GM12878 (cell line): ENCODE measurements at regions of chr9 and their contacts with region 1.

Region 1: GRCh38 chr9:89549031-89549644 is 51.2 kb upstream of the SEMA4D start:
- DNase-seq: peak; percentile 62
- ATAC-seq: peak; percentile 100
- H3K4me3 ChIP-seq: no peak overlapping the region
- H3K27ac ChIP-seq: no peak overlapping the region
- H3K4me1 ChIP-seq: peaks cover 10% of the 10 kb centered on the region
- H3K27me3 ChIP-seq: no peaks in the 10 kb centered on the region
- CTCF ChIP-seq: peak; percentile 91 to 95 (median 93)
- EP300 ChIP-seq: no peak
- POLR2A ChIP-seq: no peak
- RAD21 ChIP-seq: peak; percentile 92

Region 2: GRCh38 chr9:89318123-89319014 is 230.8 kb before region 1 on chr9 and contains the start of gene SECISBP2:
- CTCF ChIA-PET with region 1: interaction called, 11 read pairs
- POLR2A ChIA-PET with region 1: interaction called, 3 read pairs
- RAD21 ChIA-PET with region 1: interaction called, 12 read pairs
- SMC1A ChIA-PET with region 1: interaction called, 23 read pairs
- in situ Hi-C with region 1: no loop called
- intact Hi-C with region 1: loop called (anchors 2 kb)
- DNase-seq: peak; percentile 79
- ATAC-seq: peak; percentile 92
- H3K4me3 ChIP-seq: peak within 1 kb of the TSS; percentile 74
- H3K27ac ChIP-seq: peak within 1 kb of the TSS; percentile 98
- H3K4me1 ChIP-seq: peaks cover 8% of the 10 kb centered on the region
- H3K27me3 ChIP-seq: no peaks in the 10 kb centered on the region
- CTCF ChIP-seq: peak; percentile 63 to 74 (median 72); a peak in 5 of 6 replicates
- EP300 ChIP-seq: peak; percentile 9 to 14; a peak in 2 of 4 replicates
- POLR2A ChIP-seq: peak; percentile 97
- RAD21 ChIP-seq: no peak; the same call in 1 of the 2 replicates
- polyA plus RNA-seq, gene SECISBP2: 4.6 to 6.6 TPM

Region 3: GRCh38 chr9:89375191-89375760 is 173.9 kb before region 1 on chr9:
- CTCF ChIA-PET with region 1: interaction called, 42 read pairs
- POLR2A ChIA-PET with region 1: interaction called, 9 read pairs
- RAD21 ChIA-PET with region 1: interaction called, 39 read pairs
- SMC1A ChIA-PET with region 1: interaction called, 25 read pairs
- in situ Hi-C with region 1: no loop called
- intact Hi-C with region 1: no loop called
- DNase-seq: peak; percentile 42
- ATAC-seq: peak; percentile 74
- H3K4me3 ChIP-seq: no peak overlapping the region
- H3K27ac ChIP-seq: peak overlapping the region; percentile 69
- H3K4me1 ChIP-seq: peaks cover 15% of the 10 kb centered on the region
- H3K27me3 ChIP-seq: no peaks in the 10 kb centered on the region
- CTCF ChIP-seq: peak in 2 of 3 experiments; percentile 15 to 36; a peak in 3 of 6 replicates
- EP300 ChIP-seq: no peak
- POLR2A ChIP-seq: peak; percentile 61
- RAD21 ChIP-seq: peak; percentile 36; the same call in 1 of the 2 replicates

Region 4: GRCh38 chr9:89428901-89429890 is 119.9 kb before region 1 on chr9:
- CTCF ChIA-PET with region 1: interaction called, 207 read pairs
- POLR2A ChIA-PET with region 1: interaction called, 13 read pairs
- RAD21 ChIA-PET with region 1: interaction called, 119 read pairs
- SMC1A ChIA-PET with region 1: interaction called, 150 read pairs
- in situ Hi-C with region 1: loop called (anchors 5 kb)
- intact Hi-C with region 1: loop called (anchors 1 kb)
- DNase-seq: no peak
- ATAC-seq: peak; percentile 25
- H3K4me3 ChIP-seq: no peak overlapping the region
- H3K27ac ChIP-seq: peak overlapping the region; percentile 90
- H3K4me1 ChIP-seq: peaks cover 81% of the 10 kb centered on the region
- H3K27me3 ChIP-seq: no peaks in the 10 kb centered on the region
- CTCF ChIP-seq: peak; percentile 60 to 84 (median 74)
- EP300 ChIP-seq: no peak
- POLR2A ChIP-seq: no peak
- RAD21 ChIP-seq: peak; percentile 85

Region 5: DNA sequence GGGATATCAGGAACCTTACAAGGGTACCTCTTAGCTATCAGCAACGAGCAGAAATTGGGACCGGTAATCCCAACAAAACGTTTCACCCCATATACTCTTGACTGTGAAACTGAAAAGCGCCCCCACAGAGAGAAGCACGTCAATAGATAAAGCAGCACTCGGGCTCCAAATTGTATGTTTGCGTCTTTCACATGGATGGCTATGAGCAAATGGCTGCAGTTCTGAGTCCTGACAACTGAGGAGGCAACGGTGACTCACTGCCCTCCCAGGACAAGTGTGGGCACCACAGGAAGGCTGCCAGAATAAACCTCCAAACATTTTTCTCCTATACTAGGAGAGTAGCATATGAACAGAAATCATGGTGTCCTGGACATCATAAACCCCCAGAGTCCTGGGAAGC is 87.9 kb before region 1 on chr9:
- CTCF ChIA-PET with region 1: interaction called, 27 read pairs
- POLR2A ChIA-PET with region 1: no interaction called
- RAD21 ChIA-PET with region 1: interaction called, 32 read pairs
- SMC1A ChIA-PET with region 1: interaction called, 22 read pairs
- in situ Hi-C with region 1: no loop called
- intact Hi-C with region 1: loop called (anchors 1 kb)
- DNase-seq: no peak
- ATAC-seq: no peak
- H3K4me3 ChIP-seq: no peak overlapping the region
- H3K27ac ChIP-seq: no peak overlapping the region
- H3K4me1 ChIP-seq: peaks cover 58% of the 10 kb centered on the region
- H3K27me3 ChIP-seq: no peaks in the 10 kb centered on the region
- CTCF ChIP-seq: no peak
- EP300 ChIP-seq: no peak
- POLR2A ChIP-seq: no peak
- RAD21 ChIP-seq: no peak

Region 6: DNA sequence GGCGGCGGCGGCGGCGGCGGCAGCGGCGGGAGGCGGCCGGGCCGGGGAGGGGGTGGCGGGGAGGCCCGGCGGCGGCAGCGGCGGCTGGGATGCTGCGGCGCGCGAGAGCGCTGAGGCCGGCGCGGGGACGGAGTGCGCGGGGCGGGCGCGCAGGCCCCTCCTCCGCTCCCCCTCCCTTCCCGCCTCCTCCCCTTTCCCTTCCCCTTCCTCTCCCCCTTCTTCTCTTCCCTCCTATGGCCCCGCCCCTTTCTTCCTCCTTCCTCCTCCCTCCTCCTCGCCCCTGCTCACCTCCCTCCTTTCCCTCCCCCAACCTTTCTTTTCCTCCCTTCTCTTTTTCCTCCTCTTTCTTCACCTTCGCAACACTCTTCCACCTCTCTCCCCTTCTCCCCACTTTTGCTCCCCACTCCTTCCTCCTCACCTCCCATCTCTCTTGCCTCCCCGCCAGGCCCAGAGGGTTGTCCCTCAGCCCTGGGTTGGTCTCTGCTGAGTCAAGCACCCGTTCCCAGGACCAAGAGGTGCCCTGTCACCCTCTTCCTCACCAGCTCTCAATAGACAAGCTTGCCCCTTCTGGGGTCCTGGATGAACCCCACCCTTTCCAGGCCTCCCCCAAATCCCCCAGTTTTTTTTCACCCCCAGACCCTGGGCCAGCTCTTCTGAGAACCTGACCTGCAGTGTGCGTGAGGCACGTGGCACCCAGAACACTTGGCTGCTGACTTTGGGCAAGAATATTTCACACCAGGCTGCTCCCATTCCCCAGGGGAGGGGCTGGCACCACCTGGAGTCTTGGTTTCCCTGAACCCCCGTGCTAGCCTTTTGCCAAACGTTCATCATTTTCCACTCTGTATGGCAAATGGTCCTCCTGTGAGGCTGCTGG is 50.9 kb before region 1 on chr9 and contains the start of gene SEMA4D:
- CTCF ChIA-PET with region 1: interaction called, 17 read pairs
- POLR2A ChIA-PET with region 1: no interaction called
- RAD21 ChIA-PET with region 1: interaction called, 9 read pairs
- SMC1A ChIA-PET with region 1: interaction called, 19 read pairs
- in situ Hi-C with region 1: no loop called
- intact Hi-C with region 1: loop called (anchors 2 kb)
- DNase-seq: no peak
- ATAC-seq: peak; percentile 44
- H3K4me3 ChIP-seq: peak within 1 kb of the TSS; percentile 99
- H3K27ac ChIP-seq: peak within 1 kb of the TSS; percentile 72
- H3K4me1 ChIP-seq: peaks cover 37% of the 10 kb centered on the region
- H3K27me3 ChIP-seq: no peaks in the 10 kb centered on the region
- CTCF ChIP-seq: no peak
- EP300 ChIP-seq: no peak
- POLR2A ChIP-seq: peak; percentile 57; the same call in 1 of the 2 replicates
- RAD21 ChIP-seq: no peak
- polyA plus RNA-seq, gene SEMA4D: 15.1 to 22.7 TPM

Region 7: DNA sequence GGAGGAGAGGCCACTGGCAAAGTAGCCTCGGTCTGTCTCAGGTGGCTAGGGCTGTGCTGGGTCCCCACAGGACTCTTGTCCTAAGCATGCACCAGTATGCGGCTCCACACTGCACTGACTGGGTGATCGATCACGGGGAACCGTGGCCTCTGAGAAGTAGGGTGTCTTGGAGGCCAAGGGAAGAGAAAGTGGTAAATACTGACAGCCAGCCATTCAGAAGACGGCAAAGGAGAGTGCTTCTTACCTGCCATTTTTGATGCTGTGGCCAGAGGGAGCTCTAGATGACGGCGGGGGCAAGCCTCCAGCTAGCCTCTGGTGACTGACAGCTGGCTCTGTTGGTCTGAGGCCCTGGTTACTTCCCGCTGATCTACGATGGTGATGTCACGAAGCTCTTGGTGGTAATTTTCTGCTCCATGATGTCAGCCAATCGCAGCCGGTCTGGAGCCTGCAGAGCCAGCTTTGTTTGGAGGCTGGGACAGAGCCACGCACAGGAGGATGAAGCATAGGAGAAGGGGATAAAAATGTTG is 15.3 kb after region 1 on chr9:
- CTCF ChIA-PET with region 1: interaction called, 46 read pairs
- POLR2A ChIA-PET with region 1: no interaction called
- RAD21 ChIA-PET with region 1: interaction called, 6 read pairs
- SMC1A ChIA-PET with region 1: interaction called, 7 read pairs
- in situ Hi-C with region 1: no loop called
- intact Hi-C with region 1: no loop called
- DNase-seq: no peak
- ATAC-seq: peak; percentile 98
- H3K4me3 ChIP-seq: no peak overlapping the region
- H3K27ac ChIP-seq: no peak overlapping the region
- H3K4me1 ChIP-seq: peaks cover 6% of the 10 kb centered on the region; the same call in 1 of the 2 replicates
- H3K27me3 ChIP-seq: no peaks in the 10 kb centered on the region
- CTCF ChIP-seq: peak; percentile 46 to 50 (median 50)
- EP300 ChIP-seq: no peak
- POLR2A ChIP-seq: no peak
- RAD21 ChIP-seq: peak; percentile 21; the same call in 1 of the 2 replicates

Region 8: DNA sequence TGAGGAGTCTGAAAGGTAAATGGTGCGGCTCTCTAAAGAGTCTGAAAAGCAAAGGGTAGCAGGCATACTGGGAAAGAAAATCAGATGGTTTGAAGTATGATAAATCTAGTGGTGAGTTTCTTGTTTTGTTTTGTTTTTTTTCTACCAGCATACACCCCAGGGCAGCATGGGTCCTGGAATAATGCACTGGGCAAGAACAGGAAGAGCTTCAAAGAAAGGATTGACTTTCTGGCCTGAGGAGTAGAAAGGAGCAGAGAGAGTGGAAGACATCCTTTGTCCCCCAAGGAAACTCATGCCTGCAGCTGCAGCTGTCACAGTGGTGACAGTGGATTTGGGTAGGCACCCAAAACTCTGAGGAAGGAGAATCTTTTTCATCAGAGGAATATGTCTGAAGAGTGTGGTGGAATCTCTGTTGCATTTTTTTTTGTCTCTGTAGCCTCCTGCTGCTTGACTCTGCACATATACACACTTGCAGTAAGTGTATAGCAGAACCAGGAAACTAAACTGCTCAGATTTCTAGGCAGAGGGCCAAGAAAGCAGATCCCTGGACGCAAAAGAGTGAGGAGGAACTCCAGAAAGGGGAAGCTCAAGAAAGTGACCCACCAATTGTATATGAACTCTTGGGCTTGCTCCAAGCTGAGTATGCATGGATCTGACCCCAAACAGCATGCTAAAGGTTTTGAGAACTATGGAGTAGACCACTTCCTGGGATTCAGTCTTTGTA is 237.4 kb after region 1 on chr9:
- CTCF ChIA-PET with region 1: no interaction called
- POLR2A ChIA-PET with region 1: no interaction called
- RAD21 ChIA-PET with region 1: no interaction called
- SMC1A ChIA-PET with region 1: no interaction called
- in situ Hi-C with region 1: no loop called
- intact Hi-C with region 1: no loop called
- DNase-seq: no peak
- ATAC-seq: no peak
- H3K4me3 ChIP-seq: no peak overlapping the region
- H3K27ac ChIP-seq: no peak overlapping the region
- H3K4me1 ChIP-seq: no peaks in the 10 kb centered on the region; the same call in 1 of the 2 replicates
- H3K27me3 ChIP-seq: no peaks in the 10 kb centered on the region; a peak in 1 of 4 replicates
- CTCF ChIP-seq: no peak
- EP300 ChIP-seq: no peak
- POLR2A ChIP-seq: no peak
- RAD21 ChIP-seq: no peak